ENCODE measurements at regions of chr12 and their contacts with region 1.

Region 1: DNA sequence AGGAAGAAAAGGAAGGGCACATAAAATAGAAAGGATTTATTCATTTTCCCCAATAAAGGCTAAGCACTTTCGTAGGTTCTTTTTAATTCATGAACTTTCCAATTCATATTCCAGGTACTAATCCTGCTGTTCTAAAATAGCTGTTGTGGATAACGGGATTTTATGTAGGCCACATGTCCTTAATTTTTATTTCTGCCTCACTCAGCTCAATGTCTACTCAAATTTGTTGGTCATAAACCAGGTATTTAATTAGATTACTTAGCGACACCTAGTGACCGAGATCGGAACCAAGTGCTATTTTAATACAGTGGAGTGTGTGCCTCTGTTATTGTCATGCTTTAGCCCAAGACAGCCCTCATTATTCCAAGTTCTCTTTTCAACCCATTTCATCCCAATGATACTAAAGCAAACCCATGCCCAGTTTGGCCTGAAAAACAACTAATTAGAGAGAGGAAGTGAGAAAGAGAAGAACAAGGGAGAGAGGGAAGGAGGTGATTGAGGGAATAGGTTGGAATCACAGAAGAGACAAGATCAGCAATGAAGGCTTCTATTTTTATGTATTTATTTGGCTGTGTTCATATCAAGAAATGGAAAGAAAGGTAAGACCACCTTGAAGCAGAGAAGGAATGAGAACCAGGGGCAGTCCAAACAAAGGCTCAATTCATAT is 45.9 kb upstream of the IFNG-AS1 start:
- DNase-seq: peak; percentile 78
- ATAC-seq: peak; percentile 85
- H3K4me3 ChIP-seq: no peak overlapping the region
- H3K4me3 Mint-ChIP-seq: no peak overlapping the region
- H3K27ac ChIP-seq: no peak overlapping the region
- H3K27ac Mint-ChIP-seq: no peak overlapping the region
- H3K4me1 ChIP-seq: peaks cover 5 to 8% of the 10 kb centered on the region in 2 donors
- H3K4me1 Mint-ChIP-seq: peaks cover 4% of the 10 kb centered on the region
- H3K27me3 ChIP-seq: no peaks in the 10 kb centered on the region
- H3K27me3 Mint-ChIP-seq: peaks cover 3% of the 10 kb centered on the region
- CTCF ChIP-seq: peak; percentile 87

Region 2: GRCh38 chr12:67161322-67161918 is 781.9 kb before region 1 on chr12:
- CTCF ChIA-PET with region 1: interaction called, 16 read pairs
- POLR2A ChIA-PET with region 1: no interaction called
- intact Hi-C with region 1: no loop called
- DNase-seq: peak; percentile 39
- ATAC-seq: no peak
- H3K4me3 ChIP-seq: no peak overlapping the region
- H3K4me3 Mint-ChIP-seq: no peak overlapping the region
- H3K27ac ChIP-seq: no peak overlapping the region
- H3K27ac Mint-ChIP-seq: no peak overlapping the region
- H3K4me1 ChIP-seq: no peaks in the 10 kb centered on the region
- H3K4me1 Mint-ChIP-seq: no peaks in the 10 kb centered on the region
- H3K27me3 ChIP-seq: no peaks in the 10 kb centered on the region
- H3K27me3 Mint-ChIP-seq: peaks cover 11% of the 10 kb centered on the region
- CTCF ChIP-seq: peak; percentile 71

Region 3: DNA sequence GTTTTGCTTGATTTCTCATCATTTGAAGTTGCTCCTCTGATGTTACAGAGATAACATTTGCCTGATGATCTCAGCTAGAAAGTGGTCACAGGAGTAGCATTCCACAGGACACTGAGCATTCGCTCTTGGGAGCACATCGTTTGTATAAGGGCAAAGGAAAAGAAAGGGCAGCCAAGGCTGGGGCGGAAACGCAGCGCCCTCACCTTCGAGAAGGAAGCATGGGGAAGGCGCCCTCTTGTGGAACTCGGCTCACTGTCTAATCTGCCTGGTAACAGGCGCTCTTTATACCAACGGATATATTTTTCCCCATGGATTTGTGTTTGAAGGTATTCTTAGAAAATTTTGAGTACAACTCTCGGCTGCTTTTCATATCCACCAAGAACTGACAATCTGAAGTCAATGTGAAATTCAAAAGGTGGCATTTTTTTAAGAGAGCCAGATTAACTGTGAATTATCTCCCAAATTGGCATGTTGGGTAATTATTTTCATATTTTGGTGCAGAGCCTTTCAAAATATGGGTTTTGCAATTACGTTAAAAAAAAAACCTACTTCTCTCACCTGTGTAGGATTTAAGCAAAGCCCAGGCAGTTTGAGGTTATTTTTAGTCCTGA is 501.5 kb before region 1 on chr12:
- CTCF ChIA-PET with region 1: interaction called, 13 read pairs
- POLR2A ChIA-PET with region 1: no interaction called
- intact Hi-C with region 1: loop called (anchors 1 kb)
- DNase-seq: peak; percentile 76
- ATAC-seq: peak; percentile 88
- H3K4me3 ChIP-seq: no peak overlapping the region
- H3K4me3 Mint-ChIP-seq: peak overlapping the region; percentile 18
- H3K27ac ChIP-seq: no peak overlapping the region
- H3K27ac Mint-ChIP-seq: no peak overlapping the region
- H3K4me1 ChIP-seq: peaks cover 7 to 8% of the 10 kb centered on the region in 2 donors
- H3K4me1 Mint-ChIP-seq: peaks cover 8% of the 10 kb centered on the region
- H3K27me3 ChIP-seq: no peaks in the 10 kb centered on the region
- H3K27me3 Mint-ChIP-seq: no peaks in the 10 kb centered on the region
- CTCF ChIP-seq: peak; percentile 83

Region 4: DNA sequence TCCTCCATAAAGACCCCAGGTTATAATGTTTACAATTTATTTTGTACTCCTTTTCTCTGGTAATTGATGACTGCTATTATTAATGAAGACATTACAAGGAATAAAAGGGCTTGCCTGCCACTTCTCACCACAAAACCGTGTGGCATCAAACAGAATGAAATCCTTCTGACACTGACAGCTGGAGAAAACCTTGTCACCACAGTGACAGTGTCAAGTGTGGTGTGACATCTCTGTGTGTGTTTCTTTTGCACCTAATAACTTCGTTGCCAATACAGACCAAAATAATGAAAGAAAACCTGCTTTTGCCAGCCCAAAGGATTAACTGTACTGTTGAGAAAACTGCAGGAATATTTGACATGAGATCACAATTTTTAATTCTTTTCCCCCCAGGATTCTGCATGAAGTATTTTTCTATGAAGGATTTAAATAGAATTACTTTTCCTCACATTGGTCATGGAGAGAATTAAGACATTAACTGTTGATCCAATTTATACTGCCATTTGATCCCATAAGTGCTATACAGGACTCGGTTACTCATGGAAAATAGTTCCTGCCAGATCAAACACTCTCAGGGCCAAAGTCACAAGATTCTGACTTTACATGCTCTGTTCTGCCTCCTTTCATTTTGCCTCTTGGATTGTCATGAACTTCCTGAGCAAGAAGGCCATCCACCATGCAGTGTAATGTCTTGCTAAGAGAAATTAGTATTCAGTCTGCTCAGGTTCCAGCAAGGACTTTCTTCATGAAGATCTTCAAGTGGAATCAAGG is 14.6 kb before region 1 on chr12:
- CTCF ChIA-PET with region 1: interaction called, 10 read pairs
- POLR2A ChIA-PET with region 1: no interaction called
- intact Hi-C with region 1: no loop called
- DNase-seq: no peak
- ATAC-seq: no peak
- H3K4me3 ChIP-seq: no peak overlapping the region
- H3K4me3 Mint-ChIP-seq: no peak overlapping the region
- H3K27ac ChIP-seq: no peak overlapping the region
- H3K27ac Mint-ChIP-seq: no peak overlapping the region
- H3K4me1 ChIP-seq: no peaks in the 10 kb centered on the region
- H3K4me1 Mint-ChIP-seq: no peaks in the 10 kb centered on the region
- H3K27me3 ChIP-seq: no peaks in the 10 kb centered on the region
- H3K27me3 Mint-ChIP-seq: peaks cover 12% of the 10 kb centered on the region
- CTCF ChIP-seq: no peak

Region 5: GRCh38 chr12:68279227-68280054 is 336.1 kb after region 1 on chr12:
- CTCF ChIA-PET with region 1: no interaction called
- POLR2A ChIA-PET with region 1: no interaction called
- intact Hi-C with region 1: no loop called
- DNase-seq: no peak
- ATAC-seq: no peak
- H3K4me3 ChIP-seq: no peak overlapping the region
- H3K4me3 Mint-ChIP-seq: no peak overlapping the region
- H3K27ac ChIP-seq: no peak overlapping the region
- H3K27ac Mint-ChIP-seq: no peak overlapping the region
- H3K4me1 ChIP-seq: no peaks in the 10 kb centered on the region
- H3K4me1 Mint-ChIP-seq: no peaks in the 10 kb centered on the region
- H3K27me3 ChIP-seq: peaks cover 0 to 5% (median under 1%) of the 10 kb centered on the region in 4 experiments
- H3K27me3 Mint-ChIP-seq: peaks cover 4% of the 10 kb centered on the region
- CTCF ChIP-seq: no peak